H1 (cell line): ENCODE measurements at regions of chr17 and their contacts with region 1.

Region 1: GRCh38 chr17:70767102-70767701 is 597.9 kb downstream of the KCNJ2 start:
- DNase-seq: no peak
- H3K4me3 ChIP-seq: no peak overlapping the region
- H3K27ac ChIP-seq: no peak overlapping the region
- H3K4me1 ChIP-seq: no peaks in the 10 kb centered on the region
- H3K27me3 ChIP-seq: no peaks in the 10 kb centered on the region
- CTCF ChIP-seq: peak in 2 of 3 experiments; percentile 54 to 61; a peak in 3 of 4 replicates
- EP300 ChIP-seq: no peak
- POLR2A ChIP-seq: no peak
- RAD21 ChIP-seq: peak; percentile 84 to 91

Region 2: DNA sequence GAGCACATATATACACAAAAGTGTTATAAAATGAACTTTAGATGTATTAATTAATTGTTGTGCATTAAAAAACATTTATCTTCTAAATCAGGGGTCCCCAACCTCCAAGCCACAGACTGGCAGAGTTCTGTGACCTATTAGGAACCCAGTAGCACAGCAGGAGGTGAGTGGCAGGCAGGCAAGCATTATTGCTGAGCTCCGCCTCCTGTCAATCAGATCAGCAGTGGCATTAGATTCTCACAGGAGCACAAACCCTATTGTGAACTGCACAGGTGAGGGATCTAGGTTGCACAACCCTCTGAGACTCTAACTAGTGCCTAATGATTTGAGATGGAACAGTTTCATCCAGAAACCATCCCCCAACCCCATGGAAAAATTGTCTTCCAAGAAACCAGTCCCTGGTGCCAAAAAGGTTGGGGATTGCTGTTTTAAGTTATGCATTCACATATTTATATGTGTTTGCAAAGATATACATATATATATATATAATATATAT is 14.2 kb before region 1 on chr17:
- CTCF ChIA-PET with region 1: interaction called, 14 read pairs
- POLR2A ChIA-PET with region 1: no interaction called
- DNase-seq: no peak
- H3K4me3 ChIP-seq: no peak overlapping the region
- H3K27ac ChIP-seq: no peak overlapping the region
- H3K4me1 ChIP-seq: no peaks in the 10 kb centered on the region
- H3K27me3 ChIP-seq: no peaks in the 10 kb centered on the region
- CTCF ChIP-seq: no peak
- EP300 ChIP-seq: no peak
- POLR2A ChIP-seq: no peak
- RAD21 ChIP-seq: no peak

Region 3: DNA sequence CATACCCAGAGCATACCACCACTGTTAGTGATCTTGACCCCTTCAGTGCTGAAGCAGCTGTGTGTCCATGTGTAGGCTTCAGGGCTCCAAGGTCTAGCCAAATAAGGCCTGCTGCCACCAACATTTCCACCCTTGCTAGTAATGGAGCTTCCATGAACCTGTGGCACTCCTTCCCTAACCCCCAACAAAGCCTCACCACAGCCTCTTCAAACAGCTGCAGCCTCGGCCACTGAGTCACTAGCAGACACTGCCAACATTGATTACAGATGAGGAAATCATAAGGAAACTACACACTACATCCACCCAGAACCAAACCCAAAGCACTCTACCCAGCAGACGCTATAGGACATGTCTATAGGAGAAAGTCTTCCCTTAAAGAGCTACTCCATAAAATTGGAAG is 12.8 kb after region 1 on chr17:
- CTCF ChIA-PET with region 1: interaction called, 15 read pairs
- POLR2A ChIA-PET with region 1: no interaction called
- DNase-seq: no peak
- H3K4me3 ChIP-seq: no peak overlapping the region
- H3K27ac ChIP-seq: no peak overlapping the region
- H3K4me1 ChIP-seq: no peaks in the 10 kb centered on the region
- H3K27me3 ChIP-seq: no peaks in the 10 kb centered on the region
- CTCF ChIP-seq: no peak
- EP300 ChIP-seq: no peak
- POLR2A ChIP-seq: no peak
- RAD21 ChIP-seq: no peak

Region 4: GRCh38 chr17:70808596-70808995 is 41.4 kb after region 1 on chr17:
- CTCF ChIA-PET with region 1: interaction called, 21 read pairs
- POLR2A ChIA-PET with region 1: no interaction called
- DNase-seq: no peak
- H3K4me3 ChIP-seq: no peak overlapping the region
- H3K27ac ChIP-seq: no peak overlapping the region
- H3K4me1 ChIP-seq: no peaks in the 10 kb centered on the region
- H3K27me3 ChIP-seq: no peaks in the 10 kb centered on the region
- CTCF ChIP-seq: peak in 2 of 3 experiments; percentile 38 to 73; a peak in 3 of 4 replicates
- EP300 ChIP-seq: no peak
- POLR2A ChIP-seq: no peak
- RAD21 ChIP-seq: peak; percentile 46 to 52

Region 5: DNA sequence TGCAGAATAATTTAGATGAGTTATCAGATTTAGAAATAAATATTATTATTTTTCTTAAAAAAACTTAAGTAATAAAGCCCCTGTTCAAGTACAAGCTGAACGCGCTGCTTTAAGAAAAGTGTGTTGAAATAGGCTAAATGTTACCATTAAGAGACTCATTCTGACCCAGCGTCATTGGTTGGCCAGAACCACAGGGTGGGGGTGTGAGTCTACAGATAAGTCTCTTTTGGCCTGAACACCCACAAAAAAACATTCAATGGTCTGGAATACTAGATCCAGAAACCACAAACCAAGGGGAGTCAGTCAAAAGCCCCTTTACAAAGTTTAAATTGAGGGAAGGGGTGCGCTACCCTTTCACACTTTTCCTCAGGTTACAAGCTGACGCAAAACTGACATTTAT is 178.2 kb after region 1 on chr17:
- CTCF ChIA-PET with region 1: interaction called, 11 read pairs
- POLR2A ChIA-PET with region 1: no interaction called
- DNase-seq: no peak
- H3K4me3 ChIP-seq: no peak overlapping the region
- H3K27ac ChIP-seq: no peak overlapping the region
- H3K4me1 ChIP-seq: peaks cover 0 to 7% (median 1%) of the 10 kb centered on the region in 4 experiments; a peak in 2 of 7 replicates
- H3K27me3 ChIP-seq: no peaks in the 10 kb centered on the region
- CTCF ChIP-seq: peak; percentile 21 to 53 (median 49)
- EP300 ChIP-seq: no peak
- POLR2A ChIP-seq: no peak
- RAD21 ChIP-seq: peak; percentile 75 to 83

Region 6: GRCh38 chr17:71084219-71084618 is 317.0 kb after region 1 on chr17:
- CTCF ChIA-PET with region 1: interaction called, 32 read pairs
- POLR2A ChIA-PET with region 1: no interaction called
- DNase-seq: peak in 1 of 2 experiments; percentile 73
- H3K4me3 ChIP-seq: peak overlapping the region in 1 of 4 experiments; percentile 56; a peak in 2 of 8 replicates
- H3K27ac ChIP-seq: no peak overlapping the region
- H3K4me1 ChIP-seq: peaks cover 2 to 6% (median 2%) of the 10 kb centered on the region in 4 experiments; a peak in 4 of 7 replicates
- H3K27me3 ChIP-seq: no peaks in the 10 kb centered on the region
- CTCF ChIP-seq: peak; percentile 42 to 68 (median 65)
- EP300 ChIP-seq: no peak
- POLR2A ChIP-seq: no peak
- RAD21 ChIP-seq: peak; percentile 71 to 75